H1 (cell line): ENCODE measurements at regions of chr1 and their contacts with region 1.

Region 1: GRCh38 chr1:10430216-10431069 is at the start of gene CENPS:
- DNase-seq: peak; percentile 67 to 98
- H3K4me3 ChIP-seq: peak within 1 kb of the TSS; percentile 66 to 80 (median 72)
- H3K27ac ChIP-seq: peak within 1 kb of the TSS; percentile 96
- H3K4me1 ChIP-seq: peaks cover 0 to 5% (median under 1%) of the 10 kb centered on the region in 4 experiments; a peak in 4 of 7 replicates
- H3K27me3 ChIP-seq: no peaks in the 10 kb centered on the region
- CTCF ChIP-seq: peak; percentile 84 to 92 (median 90)
- EP300 ChIP-seq: no peak
- POLR2A ChIP-seq: peak in 1 of 2 experiments; percentile 90; a peak in 2 of 3 replicates
- RAD21 ChIP-seq: peak; percentile 38 to 60
- total RNA-seq, gene CENPS: 15.7 and 20.3 TPM in 2 replicates

Region 2: GRCh38 chr1:10387413-10388079 is 42.9 kb before region 1 on chr1:
- CTCF ChIA-PET with region 1: interaction called, 14 read pairs
- POLR2A ChIA-PET with region 1: no interaction called
- DNase-seq: no peak
- H3K4me3 ChIP-seq: no peak overlapping the region
- H3K27ac ChIP-seq: peak overlapping the region; percentile 66
- H3K4me1 ChIP-seq: peaks cover 0 to 5% (median 0%) of the 10 kb centered on the region in 4 experiments; a peak in 3 of 7 replicates
- H3K27me3 ChIP-seq: no peaks in the 10 kb centered on the region
- CTCF ChIP-seq: no peak
- EP300 ChIP-seq: no peak
- POLR2A ChIP-seq: no peak
- RAD21 ChIP-seq: no peak

Region 3: DNA sequence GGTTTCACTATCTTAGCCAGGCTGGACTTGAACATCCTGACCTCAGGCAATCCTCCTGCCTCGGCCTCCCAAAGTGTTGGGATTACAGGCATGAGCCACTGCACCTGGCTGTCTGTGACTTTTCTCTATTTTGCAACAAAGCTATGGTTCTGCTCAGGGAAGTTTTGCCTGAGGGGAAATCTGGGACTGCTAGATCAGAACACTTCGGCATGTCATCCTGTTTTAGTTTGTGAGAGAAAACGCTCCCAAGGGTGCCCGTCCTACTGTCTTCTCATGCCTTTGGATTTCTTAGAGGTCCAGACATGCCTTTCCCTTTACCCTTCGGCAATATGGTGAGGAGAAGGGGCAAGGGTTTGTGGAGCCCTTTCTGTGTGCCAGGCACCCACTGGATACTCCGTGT is 13.8 kb after region 1 on chr1:
- CTCF ChIA-PET with region 1: interaction called, 12 read pairs
- POLR2A ChIA-PET with region 1: interaction called, 8 read pairs
- DNase-seq: no peak
- H3K4me3 ChIP-seq: no peak overlapping the region
- H3K27ac ChIP-seq: no peak overlapping the region
- H3K4me1 ChIP-seq: no peaks in the 10 kb centered on the region
- H3K27me3 ChIP-seq: no peaks in the 10 kb centered on the region; a peak in 1 of 7 replicates
- CTCF ChIP-seq: no peak
- EP300 ChIP-seq: no peak
- POLR2A ChIP-seq: no peak
- RAD21 ChIP-seq: no peak

Region 4: GRCh38 chr1:10459181-10459580 is 28.7 kb after region 1 on chr1:
- CTCF ChIA-PET with region 1: interaction called, 34 read pairs
- POLR2A ChIA-PET with region 1: interaction called, 15 read pairs
- DNase-seq: no peak
- H3K4me3 ChIP-seq: no peak overlapping the region
- H3K27ac ChIP-seq: no peak overlapping the region
- H3K4me1 ChIP-seq: no peaks in the 10 kb centered on the region
- H3K27me3 ChIP-seq: no peaks in the 10 kb centered on the region
- CTCF ChIP-seq: no peak
- EP300 ChIP-seq: no peak
- POLR2A ChIP-seq: no peak
- RAD21 ChIP-seq: no peak

Region 5: DNA sequence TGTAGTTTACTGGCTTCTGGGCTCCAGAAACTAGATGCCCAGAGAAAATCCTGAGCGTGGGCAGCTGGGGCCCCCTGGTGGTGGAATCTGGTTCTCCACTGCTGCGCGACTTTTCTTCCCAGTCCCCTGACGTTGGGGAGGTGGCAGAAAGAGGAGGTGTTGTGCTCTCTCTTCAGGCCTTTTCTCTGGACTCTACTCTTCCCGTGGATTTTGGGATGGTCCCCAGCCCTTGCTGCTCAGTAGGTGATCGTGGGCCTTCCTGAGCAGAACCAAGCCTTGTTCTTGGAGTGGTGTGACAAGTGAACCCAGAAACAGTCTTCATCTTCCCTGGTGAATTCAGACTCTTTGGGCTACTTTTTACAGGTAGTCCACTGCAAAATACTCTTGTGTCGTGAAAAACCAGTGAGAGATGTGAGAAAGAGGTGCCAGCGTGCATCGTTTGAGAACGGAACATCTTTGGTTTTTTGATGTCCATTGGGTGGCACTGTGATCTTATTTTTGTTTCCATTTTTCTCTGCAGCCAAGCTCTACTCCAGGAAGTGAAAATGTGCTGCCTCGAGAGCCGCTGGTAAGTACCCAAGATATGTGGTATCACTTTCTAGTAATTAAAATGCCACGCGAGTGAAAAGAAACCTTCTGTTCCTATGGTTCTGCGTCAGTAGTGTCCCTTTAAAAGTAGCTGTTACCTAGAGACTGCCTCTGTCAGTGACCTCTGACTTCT is 64.5 kb after region 1 on chr1:
- CTCF ChIA-PET with region 1: interaction called, 132 read pairs
- POLR2A ChIA-PET with region 1: interaction called, 5 read pairs
- DNase-seq: peak in 1 of 2 experiments; percentile 98
- H3K4me3 ChIP-seq: no peak overlapping the region
- H3K27ac ChIP-seq: no peak overlapping the region
- H3K4me1 ChIP-seq: peaks cover 4 to 6% (median 5%) of the 10 kb centered on the region in 4 experiments; a peak in 5 of 7 replicates
- H3K27me3 ChIP-seq: no peaks in the 10 kb centered on the region
- CTCF ChIP-seq: peak; percentile 82 to 92 (median 91)
- EP300 ChIP-seq: no peak
- POLR2A ChIP-seq: no peak
- RAD21 ChIP-seq: peak; percentile 85

Region 6: DNA sequence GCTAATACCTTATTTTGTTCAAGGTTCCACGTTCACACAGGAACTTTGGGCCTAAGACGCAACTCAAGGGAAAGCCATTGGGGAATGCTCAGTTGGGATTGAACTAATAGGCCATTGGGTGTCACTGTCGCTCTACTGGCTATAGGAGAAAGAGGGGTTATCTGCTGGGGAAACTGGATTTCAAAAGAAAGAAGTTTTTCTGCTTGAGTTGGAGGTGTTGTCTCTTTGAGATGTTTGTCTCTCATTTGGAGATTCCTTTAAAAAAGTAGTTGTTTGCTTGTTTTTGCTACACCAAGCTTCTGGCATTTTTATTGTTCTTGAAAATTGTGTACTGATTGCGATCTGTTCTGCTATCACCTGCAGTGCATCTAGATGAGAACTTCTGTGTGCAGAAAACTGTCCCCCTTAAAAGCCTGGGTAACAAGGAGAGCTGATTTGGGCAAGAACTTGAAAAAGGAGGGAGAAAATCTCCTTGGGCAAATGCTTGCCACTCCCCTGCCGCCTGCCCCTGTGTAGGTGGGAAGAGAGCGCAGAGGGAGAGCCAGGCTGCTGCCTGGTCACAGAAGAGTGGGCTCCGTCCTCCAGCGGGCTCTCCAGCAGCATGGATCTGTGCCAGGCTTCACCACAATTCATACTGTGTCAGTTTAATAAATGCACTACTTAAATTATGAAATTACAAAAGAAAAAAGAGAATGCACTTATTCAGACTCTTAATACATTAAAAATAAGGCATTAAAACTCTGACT is 84.2 kb after region 1 on chr1:
- CTCF ChIA-PET with region 1: no interaction called
- POLR2A ChIA-PET with region 1: no interaction called
- DNase-seq: no peak
- H3K4me3 ChIP-seq: no peak overlapping the region
- H3K27ac ChIP-seq: no peak overlapping the region
- H3K4me1 ChIP-seq: peaks cover 12 to 25% (median 21%) of the 10 kb centered on the region in 4 experiments
- H3K27me3 ChIP-seq: no peaks in the 10 kb centered on the region
- CTCF ChIP-seq: peak; percentile 10 to 73 (median 72)
- EP300 ChIP-seq: no peak
- POLR2A ChIP-seq: no peak
- RAD21 ChIP-seq: peak; percentile 90